HEK293 (cell line): ENCODE measurements at regions of chr17 and their contacts with region 1.

Region 1: GRCh38 chr17:38509008-38509771 is 80.9 kb downstream of the ARHGAP23 start:
- H3K4me3 ChIP-seq: no peak overlapping the region
- H3K27ac ChIP-seq: no peak overlapping the region
- H3K4me1 ChIP-seq: no peaks in the 10 kb centered on the region
- CTCF ChIP-seq: peak; percentile 62

Region 2: GRCh38 chr17:38459557-38459956 is 49.6 kb before region 1 on chr17:
- CTCF ChIA-PET with region 1: no interaction called
- POLR2A ChIA-PET with region 1: no interaction called
- H3K4me3 ChIP-seq: no peak overlapping the region
- H3K27ac ChIP-seq: no peak overlapping the region
- H3K4me1 ChIP-seq: peaks cover 6% of the 10 kb centered on the region
- CTCF ChIP-seq: no peak

Region 3: DNA sequence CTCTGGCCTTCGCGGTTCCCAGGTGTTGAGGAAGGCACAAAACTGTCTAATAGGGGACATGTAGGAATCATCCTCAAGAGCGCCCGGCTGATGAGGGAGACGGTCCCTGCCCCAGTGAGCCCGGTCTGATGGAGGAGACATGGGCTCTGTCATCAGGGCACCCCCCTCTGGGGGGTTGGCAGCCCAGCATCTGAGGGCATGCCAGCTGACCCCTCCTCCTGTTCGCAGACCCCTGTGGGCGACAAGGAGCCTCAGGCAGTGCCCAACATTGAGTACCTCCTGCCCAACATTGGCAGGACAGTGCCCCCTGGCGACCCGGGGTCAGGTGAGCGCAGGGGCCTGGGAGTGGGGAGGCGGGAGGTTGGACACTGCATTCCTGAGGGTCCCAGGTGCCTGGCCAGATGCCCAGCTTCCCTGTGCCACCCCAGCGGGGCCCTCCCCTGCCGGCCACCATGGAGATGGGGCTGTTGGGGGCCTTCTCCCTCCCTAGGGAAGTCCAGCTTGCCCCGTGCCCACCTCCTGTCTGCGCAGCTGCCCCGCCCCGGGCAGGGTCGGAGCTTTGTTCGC is 10.9 kb before region 1 on chr17:
- CTCF ChIA-PET with region 1: interaction called, 27 read pairs
- POLR2A ChIA-PET with region 1: no interaction called
- H3K4me3 ChIP-seq: no peak overlapping the region
- H3K27ac ChIP-seq: no peak overlapping the region
- H3K4me1 ChIP-seq: no peaks in the 10 kb centered on the region
- CTCF ChIP-seq: no peak

Region 4: GRCh38 chr17:38539386-38539785 is 30.2 kb after region 1 on chr17:
- CTCF ChIA-PET with region 1: interaction called, 14 read pairs
- POLR2A ChIA-PET with region 1: no interaction called
- H3K4me3 ChIP-seq: no peak overlapping the region
- H3K27ac ChIP-seq: no peak overlapping the region
- H3K4me1 ChIP-seq: no peaks in the 10 kb centered on the region
- CTCF ChIP-seq: no peak